PC-9 (cell line): ENCODE measurements at regions of chr13 and their contacts with region 1.

Region 1: DNA sequence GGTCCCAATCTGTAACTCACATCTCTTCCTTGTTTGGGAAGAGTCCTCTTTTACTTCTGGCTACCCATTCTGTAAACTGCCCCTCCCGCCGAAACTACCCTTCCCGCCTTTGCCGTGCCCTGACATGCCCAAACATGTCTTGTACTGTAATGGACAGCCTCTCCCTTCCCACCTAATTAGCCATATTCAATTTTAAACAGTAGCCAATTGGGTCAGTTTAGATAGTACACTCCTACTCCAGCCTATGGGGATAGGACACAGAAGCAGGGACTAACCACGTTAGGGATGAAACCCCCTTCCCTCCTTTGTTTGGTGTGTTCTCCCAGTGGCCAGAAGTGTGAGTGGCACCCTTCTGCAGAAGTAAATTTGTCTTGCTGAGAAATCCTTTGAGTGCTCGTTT is 34.2 kb downstream of the SACS start:
- DNase-seq: no peak
- H3K4me3 ChIP-seq: no peak overlapping the region
- H3K27ac ChIP-seq: no peak overlapping the region
- H3K4me1 ChIP-seq: no peaks in the 10 kb centered on the region
- H3K27me3 ChIP-seq: peaks cover 37% of the 10 kb centered on the region; the same call in 1 of the 2 replicates
- CTCF ChIP-seq: no peak

Region 2: GRCh38 chr13:23243066-23243465 is 156.3 kb before region 1 on chr13:
- CTCF ChIA-PET with region 1: interaction called, 11 read pairs
- POLR2A ChIA-PET with region 1: no interaction called
- intact Hi-C with region 1: no loop called
- DNase-seq: no peak
- H3K4me3 ChIP-seq: no peak overlapping the region
- H3K27ac ChIP-seq: no peak overlapping the region
- H3K4me1 ChIP-seq: no peaks in the 10 kb centered on the region
- H3K27me3 ChIP-seq: peaks cover 40% of the 10 kb centered on the region
- CTCF ChIP-seq: no peak

Region 3: GRCh38 chr13:23344931-23345595 is 54.3 kb before region 1 on chr13:
- CTCF ChIA-PET with region 1: no interaction called
- POLR2A ChIA-PET with region 1: no interaction called
- intact Hi-C with region 1: no loop called
- DNase-seq: no peak
- H3K4me3 ChIP-seq: no peak overlapping the region
- H3K27ac ChIP-seq: no peak overlapping the region
- H3K4me1 ChIP-seq: no peaks in the 10 kb centered on the region
- H3K27me3 ChIP-seq: no peaks in the 10 kb centered on the region
- CTCF ChIP-seq: no peak